ENCODE measurements at regions of chr17 and their contacts with region 1.

Region 1: GRCh38 chr17:29640413-29640812 is 17.7 kb upstream of the CORO6 start:
- DNase-seq: no peak
- CTCF ChIP-seq: no peak

Region 2: GRCh38 chr17:29622337-29623282 is 17.8 kb before region 1 on chr17 and contains the start of gene CORO6:
- CTCF ChIA-PET with region 1: interaction called, 21 read pairs
- POLR2A ChIA-PET with region 1: no interaction called
- DNase-seq: peak; percentile 84
- CTCF ChIP-seq: no peak

Region 3: GRCh38 chr17:29653995-29654714 is 13.7 kb after region 1 on chr17:
- CTCF ChIA-PET with region 1: interaction called, 21 read pairs
- POLR2A ChIA-PET with region 1: no interaction called
- DNase-seq: no peak
- CTCF ChIP-seq: no peak

Measured in GM10248 (cell line).